ENCODE measurements at regions of chr2 and their contacts with region 1.

Region 1: GRCh38 chr2:108927936-108928659 is 60.9 kb downstream of the EDAR start:
- DNase-seq: peak; percentile 55
- ATAC-seq: peak; percentile 74
- H3K4me3 Mint-ChIP-seq: no peak overlapping the region
- H3K27ac Mint-ChIP-seq: no peak overlapping the region
- H3K4me1 Mint-ChIP-seq: peaks cover 2% of the 10 kb centered on the region
- H3K27me3 Mint-ChIP-seq: no peaks in the 10 kb centered on the region
- CTCF ChIP-seq: peak; percentile 85

Region 2: GRCh38 chr2:108916796-108917421 is 11.2 kb before region 1 on chr2:
- CTCF ChIA-PET with region 1: interaction called, 13 read pairs
- POLR2A ChIA-PET with region 1: no interaction called
- intact Hi-C with region 1: no loop called
- DNase-seq: no peak
- ATAC-seq: no peak
- H3K4me3 Mint-ChIP-seq: no peak overlapping the region
- H3K27ac Mint-ChIP-seq: no peak overlapping the region
- H3K4me1 Mint-ChIP-seq: no peaks in the 10 kb centered on the region
- H3K27me3 Mint-ChIP-seq: no peaks in the 10 kb centered on the region
- CTCF ChIP-seq: no peak

Region 3: DNA sequence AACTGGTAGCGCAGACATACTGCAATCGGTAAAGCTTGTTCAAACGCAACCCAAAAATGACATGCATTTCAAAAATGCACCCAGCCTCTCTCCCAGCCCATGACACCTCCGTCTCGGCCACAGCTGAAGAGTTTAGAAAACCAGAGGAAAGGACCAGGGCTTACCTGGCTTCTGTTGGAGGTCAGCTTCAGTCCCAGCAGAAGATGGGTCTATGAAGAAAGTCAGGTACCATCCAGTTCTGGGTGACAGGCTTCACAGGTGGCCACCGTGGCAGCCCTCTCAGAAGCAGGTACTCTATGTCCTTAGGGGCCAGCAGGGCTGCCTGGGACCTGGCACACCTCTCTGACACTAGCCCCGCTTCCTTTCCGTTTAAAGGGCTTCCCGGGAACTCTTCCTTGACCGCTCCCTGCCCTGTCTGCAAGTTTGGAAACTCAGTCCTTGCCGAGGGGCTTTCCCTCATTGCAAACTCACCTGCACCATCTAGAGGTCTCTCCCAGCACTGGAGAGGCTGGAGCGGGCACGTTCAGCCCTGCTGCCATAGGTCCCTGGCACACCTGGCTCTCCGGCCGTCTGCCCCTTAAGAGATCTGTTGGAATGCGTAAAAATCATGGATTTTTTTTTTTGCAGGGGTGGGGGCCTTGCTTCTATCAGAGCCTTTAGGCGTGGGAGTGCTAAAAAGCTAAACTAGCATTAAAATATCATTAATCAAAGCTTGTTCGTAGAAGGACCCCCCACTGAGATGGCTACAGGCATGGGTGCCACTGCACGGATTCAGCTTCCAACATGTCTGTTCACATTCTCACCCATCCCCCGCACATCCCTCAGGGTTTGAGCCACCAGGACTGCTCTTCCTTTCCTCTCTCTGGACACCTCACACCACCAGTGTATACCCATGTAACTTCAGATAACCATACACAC is 61.0 kb after region 1 on chr2 and contains the start of gene EDAR:
- CTCF ChIA-PET with region 1: interaction called, 52 read pairs
- POLR2A ChIA-PET with region 1: no interaction called
- intact Hi-C with region 1: loop called (anchors 2 kb)
- DNase-seq: peak; percentile 63
- ATAC-seq: peak; percentile 78
- H3K4me3 Mint-ChIP-seq: peak within 1 kb of the TSS; percentile 66
- H3K27ac Mint-ChIP-seq: no peak within 1 kb of the TSS
- H3K4me1 Mint-ChIP-seq: peaks cover 35% of the 10 kb centered on the region
- H3K27me3 Mint-ChIP-seq: no peaks in the 10 kb centered on the region
- CTCF ChIP-seq: peak; percentile 61
- total RNA-seq, gene EDAR: 0.09 to 0.11 TPM